Heart right ventricle (tissue), 16 donors: ENCODE measurements at regions of chr17 and their contacts with region 1.

Region 1: GRCh38 chr17:34852614-34853013 is 108.6 kb downstream of the CCT6B start:
- DNase-seq: no peak
- ATAC-seq: no peak
- H3K4me3 ChIP-seq: no peak overlapping the region
- H3K27ac ChIP-seq: no peak overlapping the region
- H3K4me1 ChIP-seq: peaks cover 0 to 5% (median 0%) of the 10 kb centered on the region in 9 donors
- H3K27me3 ChIP-seq: peaks cover 0 to 3% (median 0%) of the 10 kb centered on the region in 7 donors
- CTCF ChIP-seq: no peak

Region 2: DNA sequence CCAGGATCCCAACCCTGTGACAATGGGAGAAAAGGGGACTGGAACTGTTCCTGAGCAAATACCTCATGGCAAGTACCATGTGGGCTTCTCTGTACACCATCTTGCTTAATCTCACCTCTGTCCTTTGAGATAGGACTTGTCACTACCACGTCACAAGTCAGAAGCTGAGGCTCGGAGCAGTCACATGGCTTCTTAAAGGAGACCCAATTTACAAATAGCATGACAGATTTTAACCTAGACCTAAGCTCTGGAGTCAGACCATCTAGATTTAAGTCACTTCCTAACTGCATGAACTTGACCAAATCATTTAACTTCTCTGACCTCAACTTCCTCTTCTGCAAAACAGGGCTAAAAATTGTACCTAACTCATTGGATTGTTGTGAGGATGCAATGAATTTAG is 453.6 kb before region 1 on chr17:
- intact Hi-C with region 1: no loop called
- DNase-seq: no peak
- ATAC-seq: peak in 1 of 8 donors; percentile 14
- H3K4me3 ChIP-seq: no peak overlapping the region
- H3K27ac ChIP-seq: no peak overlapping the region
- H3K4me1 ChIP-seq: peaks cover 0 to 16% (median 0%) of the 10 kb centered on the region in 9 donors
- H3K27me3 ChIP-seq: peaks cover 0 to 35% (median 26%) of the 10 kb centered on the region in 7 donors
- CTCF ChIP-seq: no peak

Region 3: GRCh38 chr17:34800661-34801060 is 52.0 kb before region 1 on chr17:
- intact Hi-C with region 1: loop called in 1 of 10 experiments (anchors 10 kb)
- DNase-seq: no peak
- ATAC-seq: no peak
- H3K4me3 ChIP-seq: no peak overlapping the region
- H3K27ac ChIP-seq: no peak overlapping the region
- H3K4me1 ChIP-seq: no peaks in the 10 kb centered on the region
- H3K27me3 ChIP-seq: peaks cover 0 to 16% (median 6%) of the 10 kb centered on the region in 7 donors
- CTCF ChIP-seq: no peak

Region 4: DNA sequence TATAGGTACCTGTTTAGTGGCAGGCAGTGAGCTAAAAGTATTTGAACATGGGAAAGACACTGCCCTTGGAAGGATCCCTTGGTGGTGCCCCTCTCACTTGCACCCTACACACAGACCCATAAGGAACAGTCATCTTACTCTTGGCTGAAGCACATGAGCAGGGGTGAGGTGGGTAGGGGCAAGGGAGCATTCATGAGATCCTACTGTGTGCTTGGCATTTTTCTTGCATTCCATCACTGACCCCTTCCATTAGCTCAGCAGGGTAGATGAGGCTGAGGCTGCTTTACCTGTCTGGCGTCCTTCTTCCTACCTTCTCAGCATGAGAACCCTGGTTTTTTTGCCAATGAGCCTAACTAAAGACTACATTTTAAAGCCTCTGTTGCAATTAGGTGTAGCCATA is 60.4 kb after region 1 on chr17:
- intact Hi-C with region 1: no loop called
- DNase-seq: no peak
- ATAC-seq: no peak
- H3K4me3 ChIP-seq: no peak overlapping the region
- H3K27ac ChIP-seq: no peak overlapping the region
- H3K4me1 ChIP-seq: no peaks in the 10 kb centered on the region
- H3K27me3 ChIP-seq: no peaks in the 10 kb centered on the region
- CTCF ChIP-seq: no peak